Activated CD4-positive, alpha-beta T cell treated with anti-CD3 and anti-CD28 coated beads for 36 hours (primary cell): ENCODE measurements at regions of chr12 and their contacts with region 1.

Region 1: GRCh38 chr12:64494998-64495729 is 43.2 kb downstream of the TBK1 start:
- DNase-seq: no peak
- ATAC-seq: no peak
- H3K4me3 Mint-ChIP-seq: no peak overlapping the region
- H3K27ac Mint-ChIP-seq: no peak overlapping the region
- H3K4me1 Mint-ChIP-seq: peaks cover 23% of the 10 kb centered on the region
- H3K27me3 Mint-ChIP-seq: no peaks in the 10 kb centered on the region

Region 2: DNA sequence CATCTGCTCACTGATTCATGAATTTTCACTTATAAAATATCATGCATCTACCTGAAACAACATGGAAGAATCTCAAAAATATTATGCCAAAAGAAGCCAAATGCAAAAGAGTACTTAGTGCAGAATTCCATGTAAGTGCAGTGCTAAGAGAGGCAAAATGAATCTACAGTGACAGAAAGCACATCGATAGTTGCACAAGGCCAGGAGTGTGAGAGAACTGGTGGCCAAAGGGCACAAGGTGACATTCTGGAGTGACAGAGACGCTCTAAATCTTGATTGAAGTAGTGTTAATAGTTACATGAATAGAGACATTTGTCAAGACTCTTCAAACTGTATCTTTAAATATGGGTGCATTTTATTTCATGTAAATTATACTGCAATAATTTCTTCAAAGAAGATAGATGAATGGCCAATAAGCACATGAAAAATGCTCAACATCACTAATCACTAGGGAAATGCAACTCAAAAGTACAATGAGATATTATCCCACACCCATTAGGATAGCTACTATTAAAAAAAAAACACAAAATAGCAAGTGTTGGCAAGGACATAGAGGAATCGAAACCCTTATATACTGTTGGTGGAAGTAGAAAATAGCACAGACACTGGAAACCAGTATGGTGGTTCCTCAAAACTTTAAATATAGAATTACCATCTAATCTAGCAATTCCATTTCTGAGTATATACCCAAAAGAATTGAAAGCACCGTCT is 201.4 kb before region 1 on chr12:
- CTCF ChIA-PET with region 1: no interaction called
- POLR2A ChIA-PET with region 1: no interaction called
- intact Hi-C with region 1: loop called in 1 of 2 experiments (anchors 5 kb)
- DNase-seq: no peak
- ATAC-seq: peak; percentile 26
- H3K4me3 Mint-ChIP-seq: no peak overlapping the region
- H3K27ac Mint-ChIP-seq: no peak overlapping the region
- H3K4me1 Mint-ChIP-seq: peaks cover 12% of the 10 kb centered on the region
- H3K27me3 Mint-ChIP-seq: peaks cover 14% of the 10 kb centered on the region

Region 3: DNA sequence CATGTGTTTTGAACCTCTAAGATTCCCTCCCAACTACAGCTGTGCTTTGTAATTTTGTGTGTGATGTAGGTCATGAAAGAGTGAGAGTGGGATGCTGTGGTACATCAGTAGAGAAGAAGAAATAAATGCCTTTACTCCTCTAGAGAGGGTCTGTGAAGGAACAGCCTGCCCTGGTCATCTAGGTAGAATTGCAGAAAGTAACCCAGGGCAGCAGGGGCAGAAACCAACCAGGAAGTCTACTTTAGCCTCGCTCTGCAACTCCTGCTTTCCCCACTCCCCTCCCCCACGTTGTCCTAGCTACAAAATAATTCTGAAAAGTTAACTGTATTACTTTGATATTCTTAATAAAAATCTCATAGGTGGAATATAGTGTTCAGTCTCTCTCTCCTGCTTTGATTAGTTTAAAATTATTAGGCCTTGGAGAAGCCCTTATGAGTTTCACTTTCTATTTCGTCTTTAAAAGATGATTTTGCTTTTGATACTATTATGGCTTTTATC is 35.7 kb before region 1 on chr12:
- CTCF ChIA-PET with region 1: no interaction called
- POLR2A ChIA-PET with region 1: no interaction called
- intact Hi-C with region 1: loop called (anchors 2 to 5 kb)
- DNase-seq: peak; percentile 21
- ATAC-seq: no peak
- H3K4me3 Mint-ChIP-seq: peak overlapping the region; percentile 70
- H3K27ac Mint-ChIP-seq: peak overlapping the region; percentile 97
- H3K4me1 Mint-ChIP-seq: peaks cover 35% of the 10 kb centered on the region
- H3K27me3 Mint-ChIP-seq: no peaks in the 10 kb centered on the region